ENCODE measurements at regions of chr2 and their contacts with region 1.

Region 1: GRCh38 chr2:9799665-9800632 is 43.3 kb upstream of the TAF1B start:
- DNase-seq: peak; percentile 81
- H3K4me3 Mint-ChIP-seq: peak overlapping the region; percentile 66
- H3K27ac Mint-ChIP-seq: peak overlapping the region; percentile 85
- H3K4me1 Mint-ChIP-seq: peaks cover 37% of the 10 kb centered on the region
- H3K27me3 Mint-ChIP-seq: peaks cover 7% of the 10 kb centered on the region

Region 2: DNA sequence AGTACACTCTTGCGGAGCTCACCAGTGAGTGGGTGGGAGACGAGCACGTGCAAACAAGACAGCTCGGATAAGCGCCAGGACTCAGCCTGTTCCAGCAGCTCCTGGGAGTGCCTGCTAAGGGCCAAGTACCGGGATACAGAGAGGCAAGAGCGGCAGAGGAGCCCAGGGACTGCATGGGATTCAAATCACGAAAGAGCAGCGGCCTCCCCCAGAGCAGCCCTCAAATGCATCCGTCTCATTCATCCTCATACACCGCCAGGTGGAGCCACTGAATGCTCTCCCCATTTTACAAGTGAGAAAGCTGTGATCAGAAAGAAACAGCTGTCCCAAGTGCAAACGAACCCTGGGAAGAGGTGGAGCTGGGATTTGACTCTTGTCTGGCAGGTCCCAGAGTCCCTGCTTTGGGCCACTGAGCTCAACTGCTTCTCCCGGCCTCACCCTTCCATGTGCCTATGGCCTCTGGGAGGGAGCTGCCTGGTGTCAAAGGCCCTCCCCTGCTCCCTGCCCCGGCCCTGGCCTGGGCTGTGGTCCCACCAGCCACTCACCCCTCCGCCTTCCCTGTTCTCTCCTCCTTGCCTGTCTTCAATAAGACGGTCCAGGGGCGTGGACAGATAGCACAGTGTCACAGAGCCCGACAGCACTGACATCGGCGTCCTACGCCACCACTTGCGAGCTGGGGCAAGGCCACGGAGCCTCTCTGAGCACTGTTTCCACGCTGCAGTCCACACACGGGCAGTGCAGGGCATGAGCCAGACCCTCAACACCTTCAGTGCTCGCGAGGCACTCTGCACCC is 29.4 kb before region 1 on chr2:
- intact Hi-C with region 1: loop called (anchors 1 kb)
- DNase-seq: peak; percentile 38
- H3K4me3 Mint-ChIP-seq: no peak overlapping the region
- H3K27ac Mint-ChIP-seq: peak overlapping the region; percentile 58
- H3K4me1 Mint-ChIP-seq: peaks cover 28% of the 10 kb centered on the region
- H3K27me3 Mint-ChIP-seq: peaks cover 4% of the 10 kb centered on the region

Measured in activated T-helper 1 cell treated with anti-CD3 and anti-CD28 coated beads, Interleukin-12 subunit alpha, Interleukin-12 subunit beta, Interleukin-2, Interleukin-4 antibody, amounts not matched to agents 30 ng/mL and 10 ng/mL and 1 ng/mL, durations not matched to agents 14 hours and 24 hours and 36 hours (primary cell).